ENCODE measurements at regions of chr6 and their contacts with region 1.

Region 1: DNA sequence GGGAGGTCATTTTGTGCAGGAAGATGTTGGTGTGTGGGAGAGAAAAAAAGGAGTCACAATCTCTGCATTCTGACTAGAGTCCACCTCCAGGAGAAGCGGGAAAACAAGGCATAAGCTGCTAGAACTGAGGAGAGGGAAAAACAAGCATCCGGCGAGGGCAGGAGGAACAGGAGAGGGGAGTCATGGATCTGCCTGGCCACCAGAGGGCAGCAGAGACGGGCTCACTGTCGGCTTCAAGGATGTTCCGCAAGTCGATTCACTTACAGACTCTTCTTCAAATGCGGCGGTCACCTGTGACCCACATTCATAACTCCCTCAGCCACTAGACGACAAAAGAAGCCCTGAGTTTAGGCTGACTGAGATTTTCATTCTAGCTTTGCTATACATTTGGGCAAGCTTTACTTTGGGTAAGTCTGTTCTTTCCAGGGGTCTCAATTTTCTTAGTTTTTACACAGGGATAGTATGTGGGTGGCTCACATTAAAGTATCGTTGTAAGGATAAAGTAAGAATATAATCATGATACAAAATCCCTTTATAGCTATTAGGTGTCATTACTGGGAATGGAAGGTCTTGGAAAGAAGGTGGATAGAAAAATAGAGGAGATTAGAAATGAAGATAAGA is 6.6 kb upstream of the BTNL2 start:
- DNase-seq: peak; percentile 37 to 72
- ATAC-seq: peak; percentile 87 to 95
- H3K4me3 ChIP-seq: no peak overlapping the region
- H3K27ac ChIP-seq: no peak overlapping the region
- H3K4me1 ChIP-seq: no peaks in the 10 kb centered on the region
- CTCF ChIP-seq: peak; percentile 74
- EP300 ChIP-seq: no peak
- POLR2A ChIP-seq: no peak
- RAD21 ChIP-seq: peak; percentile 70 to 77

Region 2: GRCh38 chr6:32255199-32256153 is 158.1 kb before region 1 on chr6:
- CTCF ChIA-PET with region 1: interaction called, 13 read pairs
- POLR2A ChIA-PET with region 1: no interaction called
- DNase-seq: peak; percentile 72 to 82
- ATAC-seq: peak; percentile 99
- H3K4me3 ChIP-seq: peak overlapping the region; percentile 11
- H3K27ac ChIP-seq: peak overlapping the region; percentile 60 to 84
- H3K4me1 ChIP-seq: peaks cover 7% of the 10 kb centered on the region; the same call in 1 of the 3 replicates
- CTCF ChIP-seq: peak; percentile 66
- EP300 ChIP-seq: no peak
- POLR2A ChIP-seq: no peak
- RAD21 ChIP-seq: peak; percentile 27 to 46

Region 3: DNA sequence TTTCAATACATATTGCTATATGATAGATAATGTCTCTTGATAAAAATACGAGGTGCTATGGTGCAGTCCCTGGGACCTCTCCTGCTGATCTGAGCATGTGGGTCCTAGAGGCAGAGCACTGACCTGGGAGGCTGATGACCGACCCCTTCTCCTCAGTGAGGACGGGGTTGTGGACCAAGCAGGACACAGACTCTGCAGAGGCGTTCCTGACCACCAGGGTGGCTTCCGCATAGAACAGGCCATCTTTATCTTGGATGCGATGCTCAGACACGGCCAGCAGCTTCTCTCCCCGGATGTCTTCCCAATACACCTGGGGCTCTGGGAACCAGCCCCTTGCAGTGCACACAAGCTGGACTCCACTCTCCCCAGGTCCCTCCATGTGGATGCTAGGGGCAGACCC is 10.7 kb before region 1 on chr6:
- CTCF ChIA-PET with region 1: interaction called, 25 read pairs
- POLR2A ChIA-PET with region 1: no interaction called
- DNase-seq: no peak
- ATAC-seq: peak in 1 of 2 experiments; percentile 35; a peak in 1 of 6 replicates
- H3K4me3 ChIP-seq: no peak overlapping the region
- H3K27ac ChIP-seq: no peak overlapping the region
- H3K4me1 ChIP-seq: no peaks in the 10 kb centered on the region
- CTCF ChIP-seq: no peak
- EP300 ChIP-seq: no peak
- POLR2A ChIP-seq: no peak
- RAD21 ChIP-seq: no peak

Region 4: DNA sequence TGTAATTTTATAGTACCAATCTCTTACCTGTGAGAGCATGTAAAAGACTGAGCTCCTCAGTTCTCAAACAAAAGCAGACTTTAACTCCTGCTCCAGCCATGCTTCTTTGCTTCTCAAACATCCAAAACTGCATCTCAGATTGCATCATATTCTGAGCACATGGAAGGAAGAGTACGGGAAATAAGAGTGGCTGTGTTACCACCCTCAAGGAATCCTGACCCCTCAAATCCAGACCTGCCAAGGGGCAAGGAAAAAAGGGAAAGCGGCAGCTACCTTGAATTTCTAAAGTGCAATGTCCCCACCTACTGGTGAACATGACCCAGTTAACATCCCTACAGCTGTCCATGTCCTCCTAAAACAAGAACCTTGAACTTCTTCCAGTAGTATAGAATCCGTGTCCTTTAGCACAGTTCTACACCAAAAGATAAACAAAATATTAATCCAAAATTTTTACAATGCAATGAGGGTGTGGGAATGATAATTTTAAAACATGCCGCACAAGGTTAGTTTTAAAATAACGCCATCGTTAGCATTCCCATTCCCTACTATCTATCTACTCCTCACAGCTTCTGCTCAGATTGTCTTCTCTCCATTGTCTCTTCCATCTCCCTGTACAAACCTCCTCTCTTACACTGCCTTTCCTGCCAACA is 287.0 kb after region 1 on chr6:
- CTCF ChIA-PET with region 1: interaction called, 12 read pairs
- POLR2A ChIA-PET with region 1: no interaction called
- DNase-seq: peak; percentile 19 to 58
- ATAC-seq: peak; percentile 73 to 86; a peak in 5 of 6 replicates
- H3K4me3 ChIP-seq: no peak overlapping the region
- H3K27ac ChIP-seq: no peak overlapping the region
- H3K4me1 ChIP-seq: no peaks in the 10 kb centered on the region
- CTCF ChIP-seq: peak; percentile 76
- EP300 ChIP-seq: no peak
- POLR2A ChIP-seq: no peak
- RAD21 ChIP-seq: peak; percentile 74 to 75

Region 5: GRCh38 chr6:32785781-32786533 is 372.4 kb after region 1 on chr6:
- CTCF ChIA-PET with region 1: interaction called, 43 read pairs
- POLR2A ChIA-PET with region 1: no interaction called
- DNase-seq: peak; percentile 37 to 46
- ATAC-seq: peak; percentile 92 to 94
- H3K4me3 ChIP-seq: no peak overlapping the region
- H3K27ac ChIP-seq: no peak overlapping the region
- H3K4me1 ChIP-seq: no peaks in the 10 kb centered on the region
- CTCF ChIP-seq: peak; percentile 62
- EP300 ChIP-seq: no peak
- POLR2A ChIP-seq: no peak
- RAD21 ChIP-seq: peak; percentile 69 to 72